Activated naive CD4-positive, alpha-beta T cell treated with anti-CD3 and anti-CD28 coated beads, Interleukin-2, amount 10 ng/mL, durations not matched to agents 7 days and 5 days (primary cell): ENCODE measurements at regions of chr19 and their contacts with region 1.

Region 1: DNA sequence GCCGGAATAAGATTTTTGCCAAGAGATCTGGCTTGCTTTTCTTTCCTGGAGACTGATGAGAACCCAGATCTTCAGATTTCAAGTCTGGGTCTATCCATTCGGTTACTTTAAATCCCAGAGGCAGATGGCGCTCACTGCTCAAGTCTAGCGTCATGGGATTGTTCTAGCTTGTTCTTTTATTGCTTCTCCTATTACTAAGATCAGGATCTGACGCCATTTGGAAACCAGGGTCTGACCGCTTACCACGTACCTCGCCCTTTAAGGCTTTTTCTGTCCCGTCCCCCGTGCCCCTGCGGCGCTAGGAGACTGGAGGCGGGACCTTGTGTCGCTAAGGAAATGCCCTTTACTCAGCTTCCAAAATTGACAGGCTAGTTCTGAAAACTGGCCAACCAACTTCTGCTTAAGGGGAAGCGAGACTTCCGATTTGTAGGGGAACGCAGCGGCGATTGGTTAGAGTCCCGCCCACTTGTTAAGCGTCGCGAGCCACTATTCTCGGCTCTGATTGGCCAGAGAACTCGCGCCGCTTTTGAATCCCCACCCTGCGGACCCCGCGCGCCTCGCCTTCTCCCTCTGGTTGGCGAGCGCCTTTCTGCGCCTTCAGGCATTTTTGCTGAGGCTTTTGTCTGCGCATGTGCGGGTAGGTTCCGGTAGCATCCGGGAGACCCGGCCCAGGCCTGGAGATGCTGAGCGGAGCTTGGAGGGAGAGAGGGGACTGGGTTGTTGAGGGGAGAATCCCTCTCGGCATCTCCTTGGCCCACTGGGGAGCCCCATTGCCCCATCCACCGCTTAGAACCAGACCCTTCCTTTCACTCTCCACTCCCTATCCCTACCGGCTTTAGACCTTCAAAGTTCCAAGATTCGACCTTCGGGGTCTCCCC is 3.8 kb upstream of the C19orf84 start:
- DNase-seq: peak; percentile 96
- H3K4me3 Mint-ChIP-seq: peak overlapping the region; percentile 88
- H3K27ac Mint-ChIP-seq: peak overlapping the region; percentile 93
- H3K4me1 Mint-ChIP-seq: peaks cover 52% of the 10 kb centered on the region
- H3K27me3 Mint-ChIP-seq: peaks cover 4% of the 10 kb centered on the region

Region 2: GRCh38 chr19:51359294-51359693 is 34.9 kb before region 1 on chr19:
- CTCF ChIA-PET with region 1: no interaction called
- DNase-seq: no peak
- H3K4me3 Mint-ChIP-seq: no peak overlapping the region
- H3K27ac Mint-ChIP-seq: no peak overlapping the region
- H3K4me1 Mint-ChIP-seq: peaks cover 60% of the 10 kb centered on the region
- H3K27me3 Mint-ChIP-seq: no peaks in the 10 kb centered on the region

Region 3: GRCh38 chr19:51372649-51373504 is 21.3 kb before region 1 on chr19 and contains the start of gene NKG7:
- CTCF ChIA-PET with region 1: interaction called, 19 read pairs
- DNase-seq: peak; percentile 74
- H3K4me3 Mint-ChIP-seq: peak within 1 kb of the TSS; percentile 72
- H3K27ac Mint-ChIP-seq: peak within 1 kb of the TSS; percentile 95
- H3K4me1 Mint-ChIP-seq: peaks cover 75% of the 10 kb centered on the region
- H3K27me3 Mint-ChIP-seq: peaks cover 3% of the 10 kb centered on the region

Region 4: DNA sequence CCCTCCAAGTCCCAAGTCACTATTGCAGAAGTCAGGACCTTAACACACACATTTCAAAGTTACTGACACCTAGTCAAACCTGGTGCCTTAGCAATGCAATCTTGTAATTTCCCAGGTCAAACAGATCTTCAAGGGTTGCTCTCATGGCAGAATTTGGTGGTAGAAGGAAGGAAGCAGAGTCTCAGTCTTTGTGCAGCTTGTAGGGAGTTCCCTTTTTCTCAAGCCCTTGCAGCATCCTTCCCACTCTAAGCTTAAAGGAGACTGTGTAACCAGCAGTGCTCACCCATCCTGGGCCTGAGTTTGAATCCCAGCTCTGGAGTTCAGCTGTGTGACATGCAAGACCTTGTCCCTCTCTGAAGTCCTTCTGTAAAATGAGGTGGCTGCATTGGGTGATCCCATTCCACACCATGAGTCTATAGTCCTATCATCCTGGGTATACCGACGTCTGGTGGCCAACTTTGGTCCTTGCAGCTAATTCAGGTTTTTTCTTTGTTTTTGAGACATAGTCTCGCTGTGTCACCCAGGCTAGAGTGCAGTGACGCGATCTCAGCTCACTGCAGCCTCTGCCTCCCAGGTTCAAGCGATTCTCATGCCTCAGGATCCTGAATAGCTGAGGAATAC is 13.4 kb after region 1 on chr19:
- CTCF ChIA-PET with region 1: interaction called, 30 read pairs
- DNase-seq: peak; percentile 53
- H3K4me3 Mint-ChIP-seq: no peak overlapping the region
- H3K27ac Mint-ChIP-seq: no peak overlapping the region
- H3K4me1 Mint-ChIP-seq: no peaks in the 10 kb centered on the region
- H3K27me3 Mint-ChIP-seq: peaks cover 9% of the 10 kb centered on the region

Region 5: DNA sequence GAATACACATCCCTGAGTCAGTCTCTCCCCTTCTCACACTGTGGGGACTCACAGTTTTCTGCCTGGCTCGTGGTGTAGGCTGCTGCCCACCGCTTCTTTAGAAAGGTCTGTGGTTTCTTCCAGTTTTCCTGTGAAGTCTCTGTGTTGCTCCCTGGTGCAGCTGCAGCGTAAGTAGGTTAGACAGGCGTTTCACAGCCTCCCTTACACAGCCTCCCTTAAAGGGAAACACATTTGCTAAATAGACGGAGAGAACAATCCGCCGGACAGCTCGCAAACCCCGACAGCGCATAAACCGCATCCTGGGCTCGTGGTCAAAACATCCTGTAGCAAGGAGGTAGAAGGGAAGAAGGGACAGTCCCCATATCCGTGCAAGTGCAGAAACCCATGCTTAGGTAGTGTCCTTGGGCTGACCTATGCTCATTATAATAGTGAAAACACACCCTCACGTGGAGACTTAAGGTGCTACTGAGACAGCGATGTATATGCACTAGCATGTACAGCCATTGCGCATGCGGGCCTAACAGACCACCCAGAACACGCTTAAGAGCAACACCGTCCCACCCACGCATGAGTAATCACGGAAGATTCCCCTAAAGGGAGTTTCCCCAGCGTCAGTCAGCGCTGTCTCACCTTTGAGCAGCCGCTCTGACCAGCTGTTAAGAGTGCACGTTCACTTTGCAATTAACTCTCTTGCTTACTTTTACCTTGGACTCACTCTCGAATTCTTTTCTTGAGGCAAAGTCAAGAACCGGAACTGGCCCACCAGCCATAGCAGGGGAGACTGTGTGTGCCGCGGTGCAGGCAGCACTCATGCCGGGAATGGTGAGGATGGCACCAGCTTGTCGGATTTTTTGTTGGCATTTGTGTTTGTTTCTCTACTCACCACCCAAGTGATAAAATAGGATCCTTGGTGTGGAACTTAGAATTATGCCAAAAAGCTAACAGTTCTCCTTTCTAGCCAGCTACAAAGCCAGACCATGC is 47.5 kb after region 1 on chr19:
- CTCF ChIA-PET with region 1: interaction called, 58 read pairs
- DNase-seq: peak; percentile 91
- H3K4me3 Mint-ChIP-seq: peak overlapping the region; percentile 70
- H3K27ac Mint-ChIP-seq: peak overlapping the region; percentile 62
- H3K4me1 Mint-ChIP-seq: peaks cover 46% of the 10 kb centered on the region
- H3K27me3 Mint-ChIP-seq: peaks cover 66% of the 10 kb centered on the region